ENCODE measurements at regions of chr21 and their contacts with region 1.

Region 1: GRCh38 chr21:14869984-14870874 is 194.6 kb downstream of the NRIP1 start:
- DNase-seq: no peak

Region 2: DNA sequence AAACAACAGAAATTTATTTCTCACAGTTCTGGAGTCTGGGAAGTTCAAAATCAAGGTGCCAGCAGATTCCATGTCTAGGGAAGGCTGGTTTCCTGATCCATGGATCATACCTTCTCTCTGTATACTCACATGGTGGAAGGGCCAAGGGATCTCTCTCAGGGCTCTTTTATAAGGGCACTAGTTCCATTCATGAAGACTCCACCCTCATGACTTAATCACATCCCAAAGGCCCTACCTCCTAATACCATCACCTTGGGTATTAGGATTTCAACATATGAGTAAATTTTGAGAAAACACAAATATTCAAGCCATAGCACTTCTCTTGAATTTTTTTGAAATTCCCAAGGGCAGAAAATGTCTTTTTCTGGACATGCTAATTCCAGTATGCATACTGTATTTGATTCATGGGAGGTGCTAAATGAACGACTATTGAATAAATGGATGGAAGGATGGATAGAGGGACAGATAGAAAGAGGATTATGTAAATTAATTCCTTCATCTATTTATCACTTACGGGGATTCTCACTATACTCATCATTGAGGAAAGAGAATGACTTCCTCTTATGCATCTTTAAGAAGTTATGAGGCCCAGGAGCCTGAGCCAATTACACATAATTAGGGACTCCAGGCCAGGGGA is 11.8 kb after region 1 on chr21:
- intact Hi-C with region 1: loop called in 1 of 2 experiments (anchors 1 kb)
- DNase-seq: no peak

Region 3: GRCh38 chr21:16534408-16535101 is 1664.3 kb after region 1 on chr21:
- intact Hi-C with region 1: no loop called
- DNase-seq: peak; percentile 87